ENCODE measurements at regions of chr15 and their contacts with region 1.

Region 1: GRCh38 chr15:73633111-73633990 is at the start of gene NPTN:
- DNase-seq: peak; percentile 76
- ATAC-seq: peak; percentile 97
- H3K4me3 ChIP-seq: peak within 1 kb of the TSS; percentile 86 to 88
- H3K27ac ChIP-seq: peak within 1 kb of the TSS; percentile 95
- H3K4me1 ChIP-seq: peaks cover 36% of the 10 kb centered on the region
- H3K27me3 ChIP-seq: peaks cover 2% of the 10 kb centered on the region; the same call in 1 of the 2 replicates
- CTCF ChIP-seq: no peak
- total RNA-seq, gene NPTN: 151 TPM

Region 2: GRCh38 chr15:73305331-73306211 is 327.8 kb before region 1 on chr15:
- CTCF ChIA-PET with region 1: interaction called, 6 read pairs
- POLR2A ChIA-PET with region 1: no interaction called
- in situ Hi-C with region 1: no loop called
- intact Hi-C with region 1: loop called (anchors 5 kb)
- DNase-seq: peak; percentile 41
- ATAC-seq: peak; percentile 94
- H3K4me3 ChIP-seq: no peak overlapping the region
- H3K27ac ChIP-seq: no peak overlapping the region
- H3K4me1 ChIP-seq: no peaks in the 10 kb centered on the region
- H3K27me3 ChIP-seq: no peaks in the 10 kb centered on the region
- CTCF ChIP-seq: peak; percentile 85

Region 3: DNA sequence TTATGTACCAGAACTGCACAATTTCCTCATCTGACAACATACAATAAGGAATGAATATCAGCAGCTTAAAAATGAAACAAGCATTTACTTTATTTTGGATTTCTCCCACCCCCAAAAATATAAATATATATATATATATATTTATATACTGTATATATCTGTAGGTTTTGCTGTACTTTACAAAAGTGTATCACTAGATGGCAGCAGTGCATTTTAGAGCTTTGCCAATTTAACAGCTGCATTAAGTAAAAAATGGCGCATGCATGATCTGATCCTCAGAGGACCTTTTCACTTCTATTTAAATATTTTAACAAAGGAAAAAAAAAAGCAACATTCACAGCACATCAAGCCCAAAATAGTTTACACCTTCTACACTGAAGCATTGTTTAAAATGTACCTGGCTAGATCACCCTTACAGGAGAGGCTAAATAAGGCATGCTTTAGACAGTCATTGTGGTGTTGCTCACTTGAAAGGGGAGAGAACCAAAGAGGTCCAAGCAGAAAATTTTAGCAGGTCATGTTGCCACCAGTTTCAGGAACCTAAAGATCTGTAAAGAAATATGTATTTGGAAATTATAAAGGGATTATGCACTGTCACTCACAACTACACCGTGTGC is 72.7 kb before region 1 on chr15:
- CTCF ChIA-PET with region 1: interaction called, 23 read pairs
- POLR2A ChIA-PET with region 1: no interaction called
- in situ Hi-C with region 1: no loop called
- intact Hi-C with region 1: loop called (anchors 2 kb)
- DNase-seq: peak; percentile 46
- ATAC-seq: peak; percentile 85
- H3K4me3 ChIP-seq: no peak overlapping the region
- H3K27ac ChIP-seq: no peak overlapping the region
- H3K4me1 ChIP-seq: no peaks in the 10 kb centered on the region
- H3K27me3 ChIP-seq: no peaks in the 10 kb centered on the region
- CTCF ChIP-seq: peak; percentile 49; the same call in 1 of the 2 replicates

Region 4: DNA sequence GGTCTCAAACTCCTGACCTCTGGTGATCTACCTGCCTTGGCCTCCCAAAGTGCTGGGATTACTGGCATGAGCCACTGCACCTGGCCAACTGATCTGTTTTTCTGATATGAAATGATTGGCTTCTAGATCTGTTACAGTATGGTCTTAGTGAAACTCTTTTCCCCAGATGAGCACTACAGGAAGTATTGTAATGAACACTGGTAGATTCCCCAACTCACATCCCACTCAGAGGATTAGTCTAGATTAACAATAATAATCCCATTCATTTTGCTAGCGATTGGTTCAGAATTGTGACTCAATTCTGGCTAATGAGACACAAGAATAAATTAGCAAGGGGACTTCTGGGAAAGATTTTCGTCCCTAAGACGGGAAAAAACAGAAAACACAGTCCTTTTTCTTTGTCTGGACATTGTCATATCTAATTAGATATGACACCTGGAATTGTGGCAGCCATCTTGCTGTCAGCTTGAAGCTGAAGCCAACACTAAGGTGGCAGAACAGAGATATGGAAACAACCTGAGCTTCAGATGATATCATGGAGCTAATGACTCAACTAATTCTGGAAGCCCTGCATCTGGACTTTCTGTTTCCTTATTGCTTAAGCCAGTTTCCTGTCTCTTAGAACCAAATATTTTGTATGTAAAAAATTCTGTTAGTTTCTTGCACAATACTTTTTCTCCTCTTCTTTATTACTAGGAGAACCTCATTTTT is 17.2 kb after region 1 on chr15:
- CTCF ChIA-PET with region 1: interaction called, 10 read pairs
- POLR2A ChIA-PET with region 1: no interaction called
- in situ Hi-C with region 1: no loop called
- intact Hi-C with region 1: no loop called
- DNase-seq: no peak
- ATAC-seq: no peak
- H3K4me3 ChIP-seq: no peak overlapping the region
- H3K27ac ChIP-seq: no peak overlapping the region
- H3K4me1 ChIP-seq: no peaks in the 10 kb centered on the region
- H3K27me3 ChIP-seq: no peaks in the 10 kb centered on the region; the same call in 1 of the 2 replicates
- CTCF ChIP-seq: no peak